Endothelial cell of umbilical vein (primary cell): ENCODE measurements at regions of chr1 and their contacts with region 1.

Region 1: DNA sequence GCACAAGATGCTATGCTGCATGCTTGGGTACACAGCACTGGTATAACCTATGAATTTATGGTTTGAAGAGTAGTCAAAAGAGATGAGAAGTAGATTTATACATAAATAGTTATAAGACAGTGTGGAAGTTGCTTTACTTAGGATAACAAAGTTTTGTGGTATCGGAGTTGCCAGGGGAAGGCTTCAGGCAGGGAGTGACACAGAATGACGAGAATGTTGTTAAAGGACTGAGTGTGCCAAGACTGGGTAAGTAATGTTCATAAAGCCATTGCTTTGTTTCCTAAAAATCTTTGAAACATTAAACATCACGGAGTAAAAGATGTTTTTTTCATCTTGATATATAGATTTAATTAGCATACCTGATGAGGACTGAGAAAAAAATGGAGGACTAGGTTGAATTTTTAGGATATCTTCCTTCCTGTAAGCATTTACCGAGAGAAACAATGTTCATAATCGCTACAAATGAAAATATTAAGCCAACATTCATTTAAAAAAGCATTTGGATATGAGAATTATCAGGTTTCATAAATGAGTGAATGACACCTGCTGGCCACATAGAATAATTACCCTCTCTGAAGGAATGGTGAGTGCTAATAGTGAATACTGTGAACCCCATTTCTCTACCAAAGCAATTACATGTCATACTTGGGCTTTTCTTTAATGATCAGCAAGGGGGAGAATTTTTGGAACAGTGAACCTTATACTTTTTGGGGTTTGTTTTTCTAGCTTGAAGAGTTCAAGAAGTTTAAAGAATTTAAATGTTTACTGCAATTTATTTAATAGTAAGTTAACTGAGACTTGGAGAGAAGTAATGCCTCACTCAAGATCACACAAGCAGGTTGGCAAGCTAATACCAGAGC is 28.4 kb downstream of the EXTL2 start:
- DNase-seq: peak; percentile 78
- H3K4me3 ChIP-seq: peak overlapping the region in 1 of 3 experiments; percentile 33
- H3K27ac ChIP-seq: peak overlapping the region; percentile 70
- H3K4me1 ChIP-seq: peaks cover 17% of the 10 kb centered on the region
- H3K27me3 ChIP-seq: no peaks in the 10 kb centered on the region
- CTCF ChIP-seq: peak; percentile 44 to 49
- POLR2A ChIP-seq: no peak

Region 2: DNA sequence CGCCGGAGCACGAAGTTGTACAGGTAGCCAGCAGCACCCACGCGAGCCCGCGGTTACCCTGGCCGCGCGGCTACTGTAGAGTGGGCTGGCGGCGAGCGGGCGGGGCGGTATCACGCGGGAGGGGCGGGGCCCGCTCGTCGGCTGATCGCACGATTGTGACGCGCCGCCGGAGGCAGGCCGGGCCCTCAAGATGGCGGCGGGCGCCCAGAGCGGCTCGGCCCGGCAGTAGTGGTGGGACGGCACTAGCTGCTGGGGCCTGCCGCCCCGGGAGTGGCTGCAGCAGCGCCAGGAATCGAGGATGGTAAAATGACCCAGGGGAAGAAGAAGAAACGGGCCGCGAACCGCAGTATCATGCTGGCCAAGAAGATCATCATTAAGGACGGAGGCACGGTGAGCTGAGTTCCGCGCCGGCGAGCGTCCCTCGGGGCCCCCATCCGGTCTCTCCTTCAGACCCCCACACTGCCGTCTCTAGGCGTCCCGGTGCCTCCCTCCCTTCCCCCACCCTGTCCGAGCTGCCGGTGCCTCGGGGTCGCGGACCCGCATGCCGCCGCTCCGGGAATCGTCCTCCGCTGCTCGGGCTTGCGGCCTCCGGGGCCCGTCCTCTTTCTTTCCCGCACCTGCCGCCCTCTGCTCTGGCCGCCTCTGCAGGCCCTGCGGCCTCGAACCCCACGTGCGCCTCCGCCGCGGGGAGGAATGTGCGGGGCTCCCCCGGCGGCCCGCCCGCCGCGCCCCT is 828.2 kb before region 1 on chr1:
- CTCF ChIA-PET with region 1: interaction called, 3 read pairs
- POLR2A ChIA-PET with region 1: no interaction called
- dilution Hi-C with region 1: no loop called
- intact Hi-C with region 1: loop called (anchors 5 kb)
- DNase-seq: peak; percentile 87
- H3K4me3 ChIP-seq: peak overlapping the region; percentile 80 to 99 (median 95)
- H3K27ac ChIP-seq: peak overlapping the region; percentile 96
- H3K4me1 ChIP-seq: peaks cover 24% of the 10 kb centered on the region
- H3K27me3 ChIP-seq: no peaks in the 10 kb centered on the region
- CTCF ChIP-seq: no peak
- POLR2A ChIP-seq: peak; percentile 96

Region 3: DNA sequence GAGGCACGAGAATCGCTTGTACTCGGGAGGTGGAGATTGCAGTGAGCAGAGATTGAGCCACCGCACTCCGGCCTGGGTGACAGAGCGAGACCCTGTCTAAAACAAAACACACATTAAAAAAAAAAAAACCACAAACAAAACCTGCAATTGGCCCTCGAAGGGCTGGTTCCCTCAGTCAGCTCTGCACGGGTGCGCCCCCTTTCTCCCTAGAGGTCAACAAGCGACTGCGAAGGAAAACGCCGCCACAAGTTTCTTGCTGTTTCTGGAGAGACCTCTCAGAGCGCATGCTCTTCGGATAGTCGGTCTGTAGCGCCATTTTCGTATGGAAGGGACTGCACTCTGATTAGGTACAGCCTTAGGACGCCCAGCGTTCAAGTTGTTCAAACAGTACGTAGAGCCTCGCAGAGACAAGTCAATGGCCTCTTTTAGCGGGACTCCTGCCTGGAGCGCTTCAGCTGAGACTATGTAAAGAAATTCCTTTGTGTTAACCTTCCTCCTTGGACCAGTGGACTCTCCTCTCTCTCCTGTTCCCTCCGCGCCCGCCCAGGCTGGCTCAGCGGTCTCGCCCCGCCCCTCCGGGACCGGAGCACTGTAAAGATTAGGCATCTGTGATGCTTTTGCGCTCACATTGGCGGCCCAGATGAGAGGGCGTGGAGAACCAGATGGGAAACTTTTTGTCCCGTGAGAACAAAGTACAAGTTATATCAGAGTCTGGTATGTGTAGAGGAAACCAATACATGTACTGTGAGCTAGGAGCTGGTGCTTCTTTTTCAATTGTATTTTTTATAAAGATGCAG is 515.0 kb before region 1 on chr1:
- CTCF ChIA-PET with region 1: interaction called, 4 read pairs
- POLR2A ChIA-PET with region 1: no interaction called
- dilution Hi-C with region 1: no loop called
- intact Hi-C with region 1: loop called (anchors 5 kb)
- DNase-seq: peak; percentile 96
- H3K4me3 ChIP-seq: peak overlapping the region; percentile 77 to 97 (median 84)
- H3K27ac ChIP-seq: peak overlapping the region; percentile 84
- H3K4me1 ChIP-seq: peaks cover 33% of the 10 kb centered on the region
- H3K27me3 ChIP-seq: no peaks in the 10 kb centered on the region
- CTCF ChIP-seq: peak; percentile 18 to 41
- POLR2A ChIP-seq: peak; percentile 89

Region 4: GRCh38 chr1:100538913-100539835 is 327.1 kb before region 1 on chr1:
- CTCF ChIA-PET with region 1: interaction called, 3 read pairs
- POLR2A ChIA-PET with region 1: no interaction called
- dilution Hi-C with region 1: no loop called
- intact Hi-C with region 1: loop called (anchors 5 kb)
- DNase-seq: peak; percentile 32
- H3K4me3 ChIP-seq: peak overlapping the region; percentile 28 to 44 (median 38)
- H3K27ac ChIP-seq: no peak overlapping the region
- H3K4me1 ChIP-seq: peaks cover 15% of the 10 kb centered on the region
- H3K27me3 ChIP-seq: peaks cover 0 to 7% of the 10 kb centered on the region in 2 experiments
- CTCF ChIP-seq: peak; percentile 17 to 49
- POLR2A ChIP-seq: no peak

Region 5: GRCh38 chr1:100606438-100606837 is 259.8 kb before region 1 on chr1:
- CTCF ChIA-PET with region 1: interaction called, 56 read pairs
- POLR2A ChIA-PET with region 1: no interaction called
- dilution Hi-C with region 1: loop called (anchors 25 kb)
- intact Hi-C with region 1: loop called (anchors 1 kb)
- DNase-seq: peak; percentile 78
- H3K4me3 ChIP-seq: no peak overlapping the region
- H3K27ac ChIP-seq: no peak overlapping the region
- H3K4me1 ChIP-seq: no peaks in the 10 kb centered on the region
- H3K27me3 ChIP-seq: no peaks in the 10 kb centered on the region
- CTCF ChIP-seq: peak; percentile 53 to 63
- POLR2A ChIP-seq: no peak

Region 6: DNA sequence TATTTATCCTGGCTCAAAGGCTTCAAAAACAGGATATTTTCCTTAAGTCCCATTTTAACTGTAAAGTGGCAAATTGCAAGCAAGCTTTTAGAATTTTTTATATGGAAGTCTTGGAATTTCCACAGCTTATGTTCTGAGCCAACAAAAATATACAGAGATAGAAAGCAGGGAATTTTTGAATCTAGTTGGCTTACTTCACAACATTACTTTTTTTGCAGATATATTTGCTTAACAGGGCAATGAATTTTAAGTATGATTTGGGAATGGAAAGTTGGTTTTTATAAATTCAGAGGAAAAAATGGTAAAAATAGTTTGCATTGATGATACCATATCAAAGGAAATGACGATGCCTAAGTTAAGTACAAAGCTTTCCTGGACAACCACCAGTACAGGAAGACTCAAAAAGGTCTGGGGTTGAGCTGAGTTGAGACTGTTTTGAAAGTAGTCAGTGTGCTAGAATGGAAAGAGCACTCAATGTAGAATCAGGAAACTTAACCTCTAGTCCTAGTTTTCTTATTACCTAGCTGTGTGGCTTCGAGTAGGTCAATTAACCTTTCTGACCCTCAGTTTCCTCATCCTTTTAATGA is 157.7 kb before region 1 on chr1:
- CTCF ChIA-PET with region 1: interaction called, 5 read pairs
- POLR2A ChIA-PET with region 1: no interaction called
- dilution Hi-C with region 1: no loop called
- intact Hi-C with region 1: loop called (anchors 10 kb)
- DNase-seq: peak; percentile 85
- H3K4me3 ChIP-seq: no peak overlapping the region
- H3K27ac ChIP-seq: peak overlapping the region; percentile 61
- H3K4me1 ChIP-seq: peaks cover 25% of the 10 kb centered on the region
- H3K27me3 ChIP-seq: no peaks in the 10 kb centered on the region
- CTCF ChIP-seq: no peak
- POLR2A ChIP-seq: no peak

Region 7: GRCh38 chr1:100785470-100786052 is 80.7 kb before region 1 on chr1:
- CTCF ChIA-PET with region 1: no interaction called
- POLR2A ChIA-PET with region 1: no interaction called
- dilution Hi-C with region 1: no loop called
- intact Hi-C with region 1: no loop called
- DNase-seq: no peak
- H3K4me3 ChIP-seq: no peak overlapping the region
- H3K27ac ChIP-seq: no peak overlapping the region
- H3K4me1 ChIP-seq: no peaks in the 10 kb centered on the region
- H3K27me3 ChIP-seq: no peaks in the 10 kb centered on the region
- CTCF ChIP-seq: no peak
- POLR2A ChIP-seq: no peak

Region 8: GRCh38 chr1:100982792-100983191 is 116.5 kb after region 1 on chr1:
- CTCF ChIA-PET with region 1: no interaction called
- POLR2A ChIA-PET with region 1: no interaction called
- dilution Hi-C with region 1: no loop called
- intact Hi-C with region 1: no loop called
- DNase-seq: no peak
- H3K4me3 ChIP-seq: no peak overlapping the region
- H3K27ac ChIP-seq: no peak overlapping the region
- H3K4me1 ChIP-seq: no peaks in the 10 kb centered on the region
- H3K27me3 ChIP-seq: no peaks in the 10 kb centered on the region
- CTCF ChIP-seq: no peak
- POLR2A ChIP-seq: no peak

Region 9: DNA sequence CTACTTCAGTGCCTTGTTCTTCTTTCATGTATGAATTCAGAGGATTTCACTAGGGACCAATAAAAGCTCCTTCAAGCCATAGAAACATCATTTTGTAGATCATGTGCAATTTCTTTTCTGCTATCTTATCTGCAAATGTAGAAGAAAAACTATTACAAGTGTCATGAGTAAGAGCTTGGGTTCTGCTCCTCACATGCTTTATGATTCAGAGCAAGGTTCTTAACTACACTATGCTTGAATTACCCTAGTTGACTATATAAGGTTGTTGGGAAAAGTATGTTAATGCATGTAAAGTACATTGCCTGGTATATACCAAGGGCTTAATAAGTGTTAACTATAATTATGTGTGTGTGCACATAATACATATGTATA is 279.2 kb after region 1 on chr1:
- CTCF ChIA-PET with region 1: no interaction called
- POLR2A ChIA-PET with region 1: no interaction called
- dilution Hi-C with region 1: no loop called
- intact Hi-C with region 1: no loop called
- DNase-seq: no peak
- H3K4me3 ChIP-seq: no peak overlapping the region
- H3K27ac ChIP-seq: no peak overlapping the region
- H3K4me1 ChIP-seq: peaks cover 32% of the 10 kb centered on the region
- H3K27me3 ChIP-seq: no peaks in the 10 kb centered on the region
- CTCF ChIP-seq: no peak
- POLR2A ChIP-seq: no peak